Activated B cell treated with CpG ODN at 0.5 μM for 24 hours (primary cell): ENCODE measurements at regions of chr14 and their contacts with region 1.

Region 1: GRCh38 chr14:62179367-62180018 is 417.3 kb downstream of the SNAPC1 start:
- DNase-seq: no peak
- ATAC-seq: no peak
- H3K4me3 Mint-ChIP-seq: no peak overlapping the region
- H3K27ac Mint-ChIP-seq: no peak overlapping the region
- H3K4me1 Mint-ChIP-seq: no peaks in the 10 kb centered on the region
- H3K27me3 Mint-ChIP-seq: peaks cover 25% of the 10 kb centered on the region
- CTCF ChIP-seq: no peak

Region 2: GRCh38 chr14:62002642-62003041 is 176.9 kb before region 1 on chr14:
- CTCF ChIA-PET with region 1: no interaction called
- POLR2A ChIA-PET with region 1: no interaction called
- intact Hi-C with region 1: no loop called
- DNase-seq: no peak
- ATAC-seq: peak; percentile 72
- H3K4me3 Mint-ChIP-seq: no peak overlapping the region
- H3K27ac Mint-ChIP-seq: no peak overlapping the region
- H3K4me1 Mint-ChIP-seq: peaks cover 7% of the 10 kb centered on the region
- H3K27me3 Mint-ChIP-seq: no peaks in the 10 kb centered on the region
- CTCF ChIP-seq: no peak

Region 3: DNA sequence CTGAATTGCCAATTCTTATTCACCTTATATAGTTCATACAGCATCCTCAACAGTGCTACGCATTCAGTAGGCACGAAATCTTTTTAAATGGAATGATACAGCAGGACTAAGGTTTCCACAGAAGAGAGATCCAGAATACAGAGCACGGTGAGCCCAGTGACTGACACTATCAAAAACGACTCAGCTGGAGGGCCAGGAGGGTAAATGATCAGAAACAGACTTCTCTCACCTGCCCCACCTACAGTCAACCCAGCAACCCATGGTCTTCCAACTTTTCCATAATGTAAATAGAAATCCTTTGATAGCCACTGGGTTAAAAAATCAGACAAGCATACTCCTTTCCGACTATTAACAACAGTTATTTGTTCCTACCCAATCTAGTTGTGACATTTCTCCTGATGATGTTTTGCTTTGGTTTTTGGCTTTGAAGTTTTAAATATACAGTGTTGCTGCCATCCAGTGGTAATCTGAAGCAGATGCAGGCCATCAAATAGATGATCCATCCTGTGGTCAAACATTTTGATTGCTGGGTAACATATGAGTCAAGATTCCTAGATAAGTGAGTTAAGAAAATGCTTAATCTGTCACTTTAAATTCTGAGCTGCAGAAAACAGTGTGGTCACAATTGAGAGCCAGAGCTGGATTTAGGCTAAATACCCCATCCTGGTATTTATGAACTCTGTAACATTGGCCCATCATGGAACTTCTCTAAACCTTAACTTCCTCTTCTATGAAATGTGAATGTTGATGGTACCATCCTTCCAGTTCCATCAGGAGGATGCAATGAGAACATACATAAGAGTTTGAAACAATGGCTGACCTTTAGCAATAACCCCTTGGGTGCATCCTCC is 1097.2 kb after region 1 on chr14:
- CTCF ChIA-PET with region 1: no interaction called
- POLR2A ChIA-PET with region 1: no interaction called
- intact Hi-C with region 1: loop called (anchors 1 kb)
- DNase-seq: no peak
- ATAC-seq: peak; percentile 31
- H3K4me3 Mint-ChIP-seq: no peak overlapping the region
- H3K27ac Mint-ChIP-seq: no peak overlapping the region
- H3K4me1 Mint-ChIP-seq: no peaks in the 10 kb centered on the region
- H3K27me3 Mint-ChIP-seq: no peaks in the 10 kb centered on the region
- CTCF ChIP-seq: no peak

Region 4: GRCh38 chr14:63800651-63801375 is 1621.3 kb after region 1 on chr14:
- CTCF ChIA-PET with region 1: no interaction called
- POLR2A ChIA-PET with region 1: no interaction called
- intact Hi-C with region 1: no loop called
- DNase-seq: no peak
- ATAC-seq: no peak
- H3K4me3 Mint-ChIP-seq: no peak overlapping the region
- H3K27ac Mint-ChIP-seq: no peak overlapping the region
- H3K4me1 Mint-ChIP-seq: peaks cover 3% of the 10 kb centered on the region
- H3K27me3 Mint-ChIP-seq: no peaks in the 10 kb centered on the region
- CTCF ChIP-seq: no peak